GM12878 (cell line): ENCODE measurements at regions of chr12 and their contacts with region 1.

Region 1: GRCh38 chr12:120086801-120087621 is 29.5 kb downstream of the RAB35 start:
- DNase-seq: peak; percentile 98
- ATAC-seq: peak; percentile 98
- H3K4me3 ChIP-seq: peak overlapping the region; percentile 55; the same call in 1 of the 2 replicates
- H3K27ac ChIP-seq: peak overlapping the region; percentile 65
- H3K4me1 ChIP-seq: peaks cover 12% of the 10 kb centered on the region
- H3K27me3 ChIP-seq: no peaks in the 10 kb centered on the region
- CTCF ChIP-seq: peak; percentile 98
- EP300 ChIP-seq: peak in 1 of 2 experiments; percentile 56; a peak in 1 of 4 replicates
- POLR2A ChIP-seq: peak; percentile 75
- RAD21 ChIP-seq: peak; percentile 81

Region 2: DNA sequence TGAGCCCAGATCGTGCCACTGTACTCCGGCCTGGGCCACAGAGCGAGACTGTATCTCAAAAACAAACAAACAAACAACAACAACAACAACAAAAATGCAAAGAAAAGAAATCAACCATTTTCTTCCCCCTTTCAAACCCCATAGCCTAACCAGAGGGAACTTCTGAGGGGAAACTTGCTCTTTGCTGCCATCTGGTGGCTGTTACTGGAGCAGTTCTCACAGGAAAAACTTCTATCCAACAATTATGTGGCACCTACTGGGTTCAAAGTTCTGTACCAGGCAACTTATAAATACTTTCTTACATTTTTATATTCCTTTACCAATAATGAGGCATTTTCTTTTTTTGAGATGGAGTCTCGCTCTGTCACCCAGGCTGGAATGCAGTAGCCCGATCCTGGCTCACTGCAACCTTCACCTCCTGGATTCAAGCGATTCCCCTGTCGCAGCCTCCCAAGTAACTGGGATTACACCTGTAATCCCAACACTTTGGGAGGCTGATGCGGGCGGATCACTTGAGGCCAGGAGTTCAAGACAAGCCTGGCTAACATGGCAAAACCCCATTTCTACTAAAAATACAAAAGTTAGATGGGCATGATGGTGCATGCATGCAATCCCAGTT is 148.9 kb before region 1 on chr12:
- CTCF ChIA-PET with region 1: interaction called, 3 read pairs
- POLR2A ChIA-PET with region 1: no interaction called
- RAD21 ChIA-PET with region 1: interaction called, 3 read pairs
- SMC1A ChIA-PET with region 1: interaction called, 3 read pairs
- in situ Hi-C with region 1: no loop called
- intact Hi-C with region 1: loop called (anchors 10 kb)
- DNase-seq: peak; percentile 20
- ATAC-seq: peak; percentile 89
- H3K4me3 ChIP-seq: no peak overlapping the region
- H3K27ac ChIP-seq: no peak overlapping the region
- H3K4me1 ChIP-seq: no peaks in the 10 kb centered on the region
- H3K27me3 ChIP-seq: no peaks in the 10 kb centered on the region
- CTCF ChIP-seq: peak; percentile 80 to 82 (median 80)
- EP300 ChIP-seq: no peak
- POLR2A ChIP-seq: no peak
- RAD21 ChIP-seq: peak; percentile 70

Region 3: DNA sequence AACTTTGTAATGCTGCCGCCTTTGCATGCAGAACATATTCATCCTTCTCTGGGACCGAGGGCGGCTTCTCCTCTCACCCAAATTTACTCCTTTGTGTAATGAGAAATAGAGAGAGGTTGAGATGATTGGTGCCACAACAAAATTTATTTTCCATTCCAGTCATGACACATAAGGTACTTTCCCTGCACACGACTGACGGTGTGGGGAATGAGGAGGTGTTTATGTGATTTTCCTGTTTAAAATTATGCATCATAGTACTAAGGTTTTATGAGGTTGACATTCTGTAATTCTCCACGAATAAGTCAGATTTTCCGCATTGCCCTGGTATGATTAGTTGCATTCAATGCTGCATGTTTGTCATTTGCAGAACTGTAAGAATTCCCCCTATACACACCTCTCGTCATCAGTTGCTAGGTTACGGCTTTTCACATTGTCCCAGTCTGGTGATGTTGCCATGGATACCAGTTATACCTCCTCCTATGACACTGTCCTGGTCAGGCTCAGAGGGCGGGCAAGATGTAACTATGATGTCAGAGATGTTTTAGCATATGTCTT is 74.9 kb before region 1 on chr12:
- CTCF ChIA-PET with region 1: interaction called, 9 read pairs
- POLR2A ChIA-PET with region 1: no interaction called
- RAD21 ChIA-PET with region 1: interaction called, 10 read pairs
- SMC1A ChIA-PET with region 1: interaction called, 4 read pairs
- in situ Hi-C with region 1: no loop called
- intact Hi-C with region 1: loop called (anchors 10 kb)
- DNase-seq: peak; percentile 93
- ATAC-seq: peak; percentile 89
- H3K4me3 ChIP-seq: peak overlapping the region; percentile 9; the same call in 1 of the 2 replicates
- H3K27ac ChIP-seq: 0 out of 2 replicates have a peak overlapping the region, but pooled peaks have one; percentile 17
- H3K4me1 ChIP-seq: peaks cover 29% of the 10 kb centered on the region
- H3K27me3 ChIP-seq: no peaks in the 10 kb centered on the region
- CTCF ChIP-seq: no peak
- EP300 ChIP-seq: peak; percentile 30 to 70; a peak in 2 of 4 replicates
- POLR2A ChIP-seq: no peak
- RAD21 ChIP-seq: no peak

Region 4: DNA sequence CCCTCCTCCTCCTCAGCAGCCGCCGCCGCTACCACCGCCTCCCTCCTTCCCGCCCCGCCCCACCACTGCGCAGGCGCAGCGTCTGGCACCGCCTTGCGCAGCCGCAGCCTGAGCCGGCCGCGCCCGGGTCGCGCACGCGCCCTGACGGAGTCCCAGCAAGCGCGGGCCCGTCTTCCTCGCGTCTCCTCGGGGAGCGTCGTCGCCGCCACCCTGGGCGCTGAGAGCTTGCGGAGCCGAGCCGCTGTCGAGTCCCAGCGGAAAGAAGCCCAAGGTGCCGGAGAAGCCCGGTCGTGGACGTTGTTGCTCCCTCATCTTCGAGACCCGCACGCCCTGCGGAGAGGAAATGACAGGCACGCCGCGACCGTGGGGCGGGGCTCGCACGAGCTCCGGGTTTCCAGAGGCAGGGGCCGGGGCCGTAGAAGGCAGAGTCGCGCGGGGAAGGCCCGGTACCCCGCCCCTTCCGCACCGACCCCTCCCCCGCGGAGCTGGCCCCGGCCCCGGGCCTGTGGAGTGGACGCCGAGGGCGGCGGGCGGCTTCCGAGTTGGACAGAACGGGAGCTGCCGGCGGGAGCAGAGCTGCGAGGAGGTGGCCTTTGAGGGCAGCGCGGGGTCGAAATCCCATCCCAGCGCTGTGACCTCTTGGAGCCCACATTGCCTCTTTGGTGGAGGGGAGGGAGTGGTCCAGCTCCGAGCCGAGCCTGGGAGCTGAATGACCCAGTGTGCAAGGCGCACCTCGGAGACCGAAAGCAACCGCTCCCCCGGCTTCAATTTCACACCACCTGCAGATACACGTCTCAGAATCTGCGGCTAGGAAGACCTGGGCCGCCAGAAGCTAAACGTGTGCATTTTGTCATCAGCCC is 30.0 kb after region 1 on chr12:
- CTCF ChIA-PET with region 1: interaction called, 9 read pairs
- POLR2A ChIA-PET with region 1: interaction called, 14 read pairs
- RAD21 ChIA-PET with region 1: interaction called, 37 read pairs
- SMC1A ChIA-PET with region 1: interaction called, 20 read pairs
- in situ Hi-C with region 1: no loop called
- intact Hi-C with region 1: no loop called
- DNase-seq: no peak
- ATAC-seq: peak; percentile 64
- H3K4me3 ChIP-seq: peak overlapping the region; percentile 76
- H3K27ac ChIP-seq: peak overlapping the region; percentile 97
- H3K4me1 ChIP-seq: peaks cover 54% of the 10 kb centered on the region
- H3K27me3 ChIP-seq: no peaks in the 10 kb centered on the region
- CTCF ChIP-seq: no peak
- EP300 ChIP-seq: no peak
- POLR2A ChIP-seq: peak; percentile 90
- RAD21 ChIP-seq: no peak

Region 5: DNA sequence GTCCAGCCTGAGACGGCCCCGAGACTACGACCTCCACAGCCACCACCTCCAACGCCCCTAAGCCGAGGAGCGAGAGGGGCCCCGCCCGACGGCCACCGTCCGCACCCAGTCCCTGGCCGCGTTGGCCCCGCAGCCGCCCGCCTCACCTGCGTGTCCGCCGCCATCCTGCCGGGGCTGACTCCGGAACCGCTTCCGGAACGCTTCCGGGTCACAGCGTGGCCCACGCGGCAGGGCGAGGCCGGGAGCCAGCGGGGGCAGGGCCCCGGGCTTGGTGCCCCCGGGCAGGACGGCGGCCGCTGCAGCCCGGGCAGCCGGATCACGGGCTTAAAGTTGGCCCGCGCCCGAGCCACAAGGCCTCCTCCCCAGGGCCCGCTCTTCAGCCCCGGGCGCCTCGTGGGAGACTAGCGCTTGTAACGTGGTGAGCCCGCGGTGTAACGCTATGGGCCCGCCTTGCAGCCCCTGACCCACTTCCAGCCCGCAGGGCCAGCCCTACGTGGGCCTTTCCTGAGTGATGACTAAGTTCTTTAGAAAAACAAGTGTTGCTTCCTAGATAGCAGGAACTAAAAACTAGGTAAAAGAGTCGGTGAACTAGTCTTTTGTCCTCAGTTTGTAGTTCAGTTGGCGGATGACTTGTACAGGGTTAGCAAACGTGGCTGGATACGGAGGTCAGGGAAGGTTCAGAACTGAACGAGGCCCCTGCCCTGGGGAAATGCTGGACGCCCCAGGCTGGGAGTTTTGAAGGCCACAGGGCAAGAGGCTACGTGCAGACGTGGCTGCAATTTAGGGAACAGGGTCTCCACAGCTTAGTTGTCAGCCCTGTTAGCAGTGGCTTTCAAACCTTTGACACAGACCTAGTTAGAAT is 107.8 kb after region 1 on chr12 and contains the start of gene GCN1:
- CTCF ChIA-PET with region 1: interaction called, 22 read pairs
- POLR2A ChIA-PET with region 1: no interaction called
- RAD21 ChIA-PET with region 1: interaction called, 23 read pairs
- SMC1A ChIA-PET with region 1: interaction called, 3 read pairs
- in situ Hi-C with region 1: no loop called
- intact Hi-C with region 1: no loop called
- DNase-seq: no peak
- ATAC-seq: peak; percentile 86
- H3K4me3 ChIP-seq: peak within 1 kb of the TSS; percentile 62
- H3K27ac ChIP-seq: peak within 1 kb of the TSS; percentile 93
- H3K4me1 ChIP-seq: peaks cover 33% of the 10 kb centered on the region
- H3K27me3 ChIP-seq: no peaks in the 10 kb centered on the region
- CTCF ChIP-seq: no peak
- EP300 ChIP-seq: no peak
- POLR2A ChIP-seq: peak; percentile 96
- RAD21 ChIP-seq: no peak
- polyA plus RNA-seq, gene GCN1: 10.8 to 12.1 TPM

Region 6: GRCh38 chr12:120276734-120277133 is 189.7 kb after region 1 on chr12:
- CTCF ChIA-PET with region 1: no interaction called
- POLR2A ChIA-PET with region 1: no interaction called
- RAD21 ChIA-PET with region 1: no interaction called
- SMC1A ChIA-PET with region 1: no interaction called
- in situ Hi-C with region 1: no loop called
- intact Hi-C with region 1: no loop called
- DNase-seq: no peak
- ATAC-seq: no peak
- H3K4me3 ChIP-seq: no peak overlapping the region
- H3K27ac ChIP-seq: no peak overlapping the region
- H3K4me1 ChIP-seq: no peaks in the 10 kb centered on the region
- H3K27me3 ChIP-seq: no peaks in the 10 kb centered on the region
- CTCF ChIP-seq: no peak
- EP300 ChIP-seq: no peak
- POLR2A ChIP-seq: no peak
- RAD21 ChIP-seq: no peak